GM10248 (cell line): ENCODE measurements at regions of chr19 and their contacts with region 1.

Region 1: DNA sequence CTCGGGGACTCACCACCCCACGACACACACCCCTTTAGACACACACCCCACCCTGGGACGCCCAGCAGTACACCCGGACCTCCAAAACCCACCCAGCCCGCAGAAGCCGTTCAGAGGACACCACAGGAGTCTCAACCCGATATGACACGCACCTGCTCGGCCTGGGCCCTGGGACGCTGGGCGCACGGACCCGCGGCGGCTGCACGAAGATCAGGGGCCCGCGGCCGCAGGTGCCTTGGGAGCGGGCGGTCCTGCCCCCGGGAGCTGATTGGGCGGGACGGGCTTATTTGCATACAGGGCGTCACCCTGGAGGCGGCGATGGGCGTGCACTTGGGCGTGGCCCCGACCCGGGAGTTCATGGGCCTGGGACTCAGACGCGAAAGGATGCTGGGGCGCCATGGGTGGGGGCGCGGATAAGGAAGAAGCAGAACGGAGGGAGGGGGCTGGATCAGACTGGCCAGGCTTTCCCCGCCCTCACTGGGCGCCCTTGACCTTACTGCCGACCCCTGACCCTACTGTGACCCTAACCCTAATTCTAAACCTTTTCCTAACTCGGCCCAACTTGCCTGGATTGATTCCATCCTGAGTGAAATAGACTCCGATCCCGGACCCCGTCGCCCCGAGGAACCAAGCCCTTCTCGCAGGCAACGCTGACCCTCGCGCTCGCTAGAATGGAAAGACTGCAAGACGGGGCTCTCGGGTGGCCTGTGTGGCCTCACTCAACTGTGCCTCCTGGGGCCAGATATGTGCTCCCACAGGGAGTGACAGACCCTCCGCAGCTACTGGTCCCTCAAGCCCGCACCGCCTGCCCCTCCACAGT is at the start of gene MEF2B:
- DNase-seq: peak; percentile 96
- CTCF ChIP-seq: no peak

Region 2: GRCh38 chr19:19138169-19138981 is 31.9 kb before region 1 on chr19 and contains the start of gene TMEM161A:
- CTCF ChIA-PET with region 1: interaction called, 302 read pairs
- POLR2A ChIA-PET with region 1: interaction called, 4 read pairs
- DNase-seq: peak; percentile 100
- CTCF ChIP-seq: no peak

Region 3: DNA sequence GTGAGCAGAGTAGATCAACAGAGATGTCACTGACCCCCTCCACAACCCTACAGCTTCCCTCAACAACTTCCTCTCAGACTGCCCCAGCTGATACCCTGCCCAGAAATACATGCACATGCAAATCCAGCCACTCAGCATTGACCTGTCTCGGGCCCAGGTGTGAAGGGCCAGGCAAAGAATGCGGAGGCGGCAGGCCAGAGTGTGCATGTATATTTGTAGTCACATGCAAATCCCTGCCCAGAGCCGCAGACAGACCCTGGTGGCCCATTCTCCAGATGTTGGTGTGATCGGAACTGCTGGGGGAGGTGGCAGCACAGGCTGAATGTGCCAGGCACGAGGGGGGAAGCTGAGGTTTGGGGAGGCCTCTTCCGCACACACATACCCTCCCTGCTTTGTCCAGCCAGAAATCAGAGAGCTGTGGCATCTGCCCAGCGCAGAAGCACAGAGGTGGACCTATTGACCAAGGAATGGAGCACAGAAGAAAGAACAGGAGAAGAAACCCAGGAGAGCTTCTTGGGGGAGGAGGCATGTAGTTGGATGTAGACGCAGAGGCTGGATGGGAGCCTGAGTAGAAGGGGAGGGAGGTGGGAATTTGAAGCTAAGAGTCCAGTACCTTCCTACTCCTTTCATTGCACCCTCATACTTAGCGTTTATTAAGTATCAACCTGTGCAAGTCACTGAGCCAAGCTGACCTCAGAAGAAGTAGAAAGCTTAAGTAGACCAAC is 14.6 kb before region 1 on chr19:
- CTCF ChIA-PET with region 1: interaction called, 302 read pairs
- POLR2A ChIA-PET with region 1: interaction called, 5 read pairs
- DNase-seq: peak; percentile 77
- CTCF ChIP-seq: no peak

Region 4: GRCh38 chr19:19185853-19186740 is 15.8 kb after region 1 on chr19:
- CTCF ChIA-PET with region 1: interaction called, 21 read pairs
- POLR2A ChIA-PET with region 1: interaction called, 4 read pairs
- DNase-seq: no peak
- CTCF ChIP-seq: peak; percentile 46

Region 5: DNA sequence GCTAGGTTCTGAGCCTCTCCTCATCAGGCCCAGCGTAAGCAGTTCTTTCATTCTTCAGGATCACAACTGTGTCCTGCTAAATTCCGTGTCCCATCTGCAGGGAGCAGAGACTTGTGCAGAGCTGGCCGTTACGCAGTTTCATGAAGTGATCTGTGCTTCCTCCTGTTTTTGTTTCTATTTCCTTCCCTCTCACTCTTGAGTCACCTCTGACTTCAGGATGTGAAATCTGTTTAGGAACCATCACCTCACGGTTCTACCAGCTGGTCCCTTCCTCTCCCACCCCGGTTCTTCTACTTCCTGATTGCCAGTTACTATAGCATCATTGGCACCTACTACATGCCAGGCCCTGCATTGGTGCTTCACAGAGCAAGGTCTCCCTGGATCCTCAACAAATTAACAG is 158.9 kb after region 1 on chr19:
- CTCF ChIA-PET with region 1: no interaction called
- POLR2A ChIA-PET with region 1: no interaction called
- DNase-seq: no peak
- CTCF ChIP-seq: no peak